ENCODE measurements at regions of chr3 and their contacts with region 1.

Region 1: DNA sequence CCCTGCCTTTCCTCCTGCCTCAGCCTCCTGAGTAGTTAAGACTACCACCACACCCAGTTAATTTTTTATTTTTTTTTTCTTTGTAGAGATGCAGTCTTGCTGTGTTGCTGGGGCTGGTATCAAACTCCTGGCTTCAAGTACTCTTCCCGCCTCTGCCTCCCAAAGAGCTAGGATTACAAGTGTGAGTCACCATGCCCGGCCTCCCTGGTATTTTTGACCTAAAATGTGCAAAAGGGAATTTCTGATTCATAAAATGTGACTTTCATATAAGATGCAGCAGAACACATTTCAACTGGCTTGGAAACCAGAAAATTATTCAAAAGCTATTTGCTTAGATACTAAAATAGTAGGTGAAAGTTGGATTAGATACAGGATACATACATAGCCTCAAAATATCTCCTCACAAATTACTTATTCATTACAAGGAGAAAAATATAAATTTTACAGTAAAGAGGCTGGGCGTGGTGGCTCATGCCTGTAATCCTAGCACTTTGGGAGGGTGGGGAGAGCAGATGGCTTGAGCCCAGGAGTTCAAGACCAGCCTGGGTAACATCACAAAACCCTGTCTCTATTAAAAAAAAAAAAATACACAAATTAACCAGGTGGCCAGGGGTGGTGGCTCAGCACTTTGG is 32.0 kb downstream of the MAP4 start:
- DNase-seq: no peak
- ATAC-seq: no peak
- H3K4me3 ChIP-seq: no peak overlapping the region
- H3K27ac ChIP-seq: peak overlapping the region in 2 of 4 donors; percentile 28 to 44
- H3K4me1 ChIP-seq: peaks cover 51 to 61% of the 10 kb centered on the region in 2 donors
- H3K27me3 ChIP-seq: no peaks in the 10 kb centered on the region
- CTCF ChIP-seq: no peak
- POLR2A ChIP-seq: no peak

Region 2: DNA sequence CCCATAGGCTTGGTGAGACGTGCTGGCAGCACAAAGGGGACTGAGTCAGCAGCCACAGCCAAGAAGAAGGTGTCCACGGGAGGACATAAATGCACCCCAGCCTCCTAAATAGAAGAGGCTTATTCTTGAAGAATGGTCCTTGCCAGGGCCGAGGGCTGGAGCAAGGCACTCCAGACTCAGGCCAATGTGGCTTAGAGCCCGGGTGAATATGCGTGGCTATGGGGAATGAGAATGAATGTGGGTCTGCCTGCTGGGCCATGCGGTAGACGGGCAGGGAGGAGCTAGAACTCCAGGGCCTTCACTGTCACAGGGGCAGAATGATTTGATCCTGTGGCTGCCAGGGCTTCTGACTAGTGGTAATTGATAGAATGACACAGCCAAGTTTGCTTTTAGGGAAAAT is 147.2 kb before region 1 on chr3:
- in situ Hi-C with region 1: loop called in 2 of 4 experiments (anchors 5 to 10 kb)
- intact Hi-C with region 1: no loop called
- DNase-seq: no peak
- ATAC-seq: no peak
- H3K4me3 ChIP-seq: no peak overlapping the region
- H3K27ac ChIP-seq: peak overlapping the region in 1 of 4 donors; percentile 54
- H3K4me1 ChIP-seq: no peaks in the 10 kb centered on the region
- H3K27me3 ChIP-seq: no peaks in the 10 kb centered on the region
- CTCF ChIP-seq: no peak
- POLR2A ChIP-seq: no peak

Region 3: GRCh38 chr3:48077815-48078214 is 93.6 kb after region 1 on chr3:
- in situ Hi-C with region 1: no loop called
- intact Hi-C with region 1: no loop called
- DNase-seq: no peak
- ATAC-seq: no peak
- H3K4me3 ChIP-seq: no peak overlapping the region
- H3K27ac ChIP-seq: no peak overlapping the region
- H3K4me1 ChIP-seq: peaks cover 24 to 32% of the 10 kb centered on the region in 2 donors
- H3K27me3 ChIP-seq: no peaks in the 10 kb centered on the region
- CTCF ChIP-seq: no peak
- POLR2A ChIP-seq: no peak

Measured in gastrocnemius medialis (tissue), 4 donors.